Activated CD8-positive, alpha-beta memory T cell treated with anti-CD3 and anti-CD28 coated beads, Interleukin-2, amount 10 ng/mL, durations not matched to agents 7 days and 5 days (primary cell): ENCODE measurements at regions of chr5 and their contacts with region 1.

Region 1: GRCh38 chr5:73201547-73202513 is 28.8 kb downstream of the TMEM174 start:
- DNase-seq: peak; percentile 73
- ATAC-seq: peak; percentile 92
- H3K4me3 Mint-ChIP-seq: no peak overlapping the region
- H3K27ac Mint-ChIP-seq: no peak overlapping the region
- H3K4me1 Mint-ChIP-seq: peaks cover 3% of the 10 kb centered on the region
- H3K27me3 Mint-ChIP-seq: peaks cover 53% of the 10 kb centered on the region

Region 2: DNA sequence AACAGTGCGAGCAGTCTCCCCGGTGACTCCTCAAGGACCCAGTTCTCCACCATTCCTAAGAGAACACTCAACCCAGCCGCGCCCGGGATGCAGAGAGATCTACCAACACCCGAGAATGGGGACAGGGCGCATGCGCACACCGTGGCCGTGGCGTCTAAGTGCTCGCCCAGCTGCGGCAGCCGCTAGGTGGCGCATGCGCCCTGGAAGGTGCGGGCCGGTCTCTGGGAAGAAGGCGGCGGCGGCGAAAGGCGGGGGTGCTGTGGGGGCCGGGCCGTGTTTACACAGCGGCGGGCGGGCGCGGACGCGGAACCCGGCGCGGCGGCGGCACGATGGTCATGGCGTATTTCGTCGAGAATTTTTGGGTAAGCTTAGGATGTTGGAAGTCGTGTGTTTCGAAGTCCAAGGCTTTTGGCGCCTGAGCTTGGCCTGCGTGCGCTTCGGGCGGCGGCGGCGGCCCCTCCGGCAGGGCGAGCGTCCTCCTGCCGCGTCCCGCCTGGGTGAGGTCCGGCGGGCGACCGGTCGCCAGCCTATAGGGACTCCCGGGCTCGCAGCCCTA is 246.0 kb before region 1 on chr5 and contains the start of gene FCHO2:
- CTCF ChIA-PET with region 1: interaction called, 17 read pairs
- DNase-seq: peak; percentile 96
- ATAC-seq: peak; percentile 93
- H3K4me3 Mint-ChIP-seq: peak within 1 kb of the TSS; percentile 90
- H3K27ac Mint-ChIP-seq: peak within 1 kb of the TSS; percentile 79
- H3K4me1 Mint-ChIP-seq: peaks cover 17% of the 10 kb centered on the region
- H3K27me3 Mint-ChIP-seq: peaks cover 47% of the 10 kb centered on the region
- total RNA-seq, gene FCHO2: 2.1 to 2.8 TPM

Region 3: GRCh38 chr5:73088026-73088425 is 113.8 kb before region 1 on chr5:
- CTCF ChIA-PET with region 1: interaction called, 17 read pairs
- DNase-seq: no peak
- ATAC-seq: no peak
- H3K4me3 Mint-ChIP-seq: no peak overlapping the region
- H3K27ac Mint-ChIP-seq: no peak overlapping the region
- H3K4me1 Mint-ChIP-seq: no peaks in the 10 kb centered on the region
- H3K27me3 Mint-ChIP-seq: peaks cover 2% of the 10 kb centered on the region